ENCODE measurements at regions of chr18 and their contacts with region 1.

Region 1: GRCh38 chr18:35040988-35041814 is at the start of gene MAPRE2:
- DNase-seq: peak; percentile 96 to 100 (median 99)
- ATAC-seq: peak; percentile 82 to 89 (median 84)
- H3K4me3 ChIP-seq: peak within 1 kb of the TSS; percentile 97
- H3K4me3 Mint-ChIP-seq: peak within 1 kb of the TSS; percentile 89 to 98 (median 90)
- H3K27ac ChIP-seq: peak within 1 kb of the TSS; percentile 98
- H3K27ac Mint-ChIP-seq: peak within 1 kb of the TSS; percentile 96 to 98
- H3K4me1 ChIP-seq: peaks cover 30 to 34% of the 10 kb centered on the region in 2 experiments
- H3K4me1 Mint-ChIP-seq: peaks cover 61 to 76% (median 65%) of the 10 kb centered on the region in 3 donors
- H3K27me3 ChIP-seq: no peaks in the 10 kb centered on the region
- H3K27me3 Mint-ChIP-seq: no peaks in the 10 kb centered on the region
- total RNA-seq, gene MAPRE2: 45.6 to 96.7 (median 53.9) TPM

Region 2: GRCh38 chr18:34834897-34835296 is 206.3 kb before region 1 on chr18:
- CTCF ChIA-PET with region 1: no interaction called
- POLR2A ChIA-PET with region 1: no interaction called
- DNase-seq: no peak
- ATAC-seq: no peak
- H3K4me3 ChIP-seq: no peak overlapping the region
- H3K4me3 Mint-ChIP-seq: no peak overlapping the region
- H3K27ac ChIP-seq: no peak overlapping the region
- H3K27ac Mint-ChIP-seq: no peak overlapping the region
- H3K4me1 ChIP-seq: no peaks in the 10 kb centered on the region
- H3K4me1 Mint-ChIP-seq: no peaks in the 10 kb centered on the region
- H3K27me3 ChIP-seq: no peaks in the 10 kb centered on the region
- H3K27me3 Mint-ChIP-seq: peaks cover 0 to 3% of the 10 kb centered on the region in 2 donors

Region 3: GRCh38 chr18:34938090-34938489 is 103.1 kb before region 1 on chr18:
- CTCF ChIA-PET with region 1: no interaction called
- POLR2A ChIA-PET with region 1: no interaction called
- DNase-seq: no peak
- ATAC-seq: no peak
- H3K4me3 ChIP-seq: no peak overlapping the region
- H3K4me3 Mint-ChIP-seq: no peak overlapping the region
- H3K27ac ChIP-seq: no peak overlapping the region
- H3K27ac Mint-ChIP-seq: no peak overlapping the region
- H3K4me1 ChIP-seq: no peaks in the 10 kb centered on the region
- H3K4me1 Mint-ChIP-seq: no peaks in the 10 kb centered on the region
- H3K27me3 ChIP-seq: peaks cover 0 to 2% of the 10 kb centered on the region in 2 experiments
- H3K27me3 Mint-ChIP-seq: peaks cover 9 to 23% of the 10 kb centered on the region in 2 donors

Region 4: GRCh38 chr18:35060122-35060815 is 19.1 kb after region 1 on chr18:
- CTCF ChIA-PET with region 1: interaction called in 1 of 2 experiments, 3 read pairs
- POLR2A ChIA-PET with region 1: interaction called, 3 to 18 read pairs
- DNase-seq: no peak
- ATAC-seq: no peak
- H3K4me3 ChIP-seq: no peak overlapping the region
- H3K4me3 Mint-ChIP-seq: no peak overlapping the region
- H3K27ac ChIP-seq: no peak overlapping the region
- H3K27ac Mint-ChIP-seq: no peak overlapping the region
- H3K4me1 ChIP-seq: peaks cover 0 to 19% of the 10 kb centered on the region in 2 experiments
- H3K4me1 Mint-ChIP-seq: peaks cover 74 to 84% (median 79%) of the 10 kb centered on the region in 3 donors
- H3K27me3 ChIP-seq: no peaks in the 10 kb centered on the region
- H3K27me3 Mint-ChIP-seq: no peaks in the 10 kb centered on the region

Region 5: GRCh38 chr18:35106845-35107148 is 65.6 kb after region 1 on chr18:
- CTCF ChIA-PET with region 1: interaction called in 1 of 2 experiments, 9 read pairs
- POLR2A ChIA-PET with region 1: interaction called, 3 to 23 read pairs
- DNase-seq: peak in 1 of 35 experiments; percentile 54
- ATAC-seq: peak; percentile 19 to 79 (median 45)
- H3K4me3 ChIP-seq: no peak overlapping the region
- H3K4me3 Mint-ChIP-seq: peak overlapping the region in 1 of 3 donors; percentile 4
- H3K27ac ChIP-seq: no peak overlapping the region
- H3K27ac Mint-ChIP-seq: peak overlapping the region; percentile 73 to 78
- H3K4me1 ChIP-seq: peaks cover 0 to 28% of the 10 kb centered on the region in 2 experiments
- H3K4me1 Mint-ChIP-seq: peaks cover 48 to 71% (median 63%) of the 10 kb centered on the region in 3 donors
- H3K27me3 ChIP-seq: no peaks in the 10 kb centered on the region
- H3K27me3 Mint-ChIP-seq: no peaks in the 10 kb centered on the region

Region 6: DNA sequence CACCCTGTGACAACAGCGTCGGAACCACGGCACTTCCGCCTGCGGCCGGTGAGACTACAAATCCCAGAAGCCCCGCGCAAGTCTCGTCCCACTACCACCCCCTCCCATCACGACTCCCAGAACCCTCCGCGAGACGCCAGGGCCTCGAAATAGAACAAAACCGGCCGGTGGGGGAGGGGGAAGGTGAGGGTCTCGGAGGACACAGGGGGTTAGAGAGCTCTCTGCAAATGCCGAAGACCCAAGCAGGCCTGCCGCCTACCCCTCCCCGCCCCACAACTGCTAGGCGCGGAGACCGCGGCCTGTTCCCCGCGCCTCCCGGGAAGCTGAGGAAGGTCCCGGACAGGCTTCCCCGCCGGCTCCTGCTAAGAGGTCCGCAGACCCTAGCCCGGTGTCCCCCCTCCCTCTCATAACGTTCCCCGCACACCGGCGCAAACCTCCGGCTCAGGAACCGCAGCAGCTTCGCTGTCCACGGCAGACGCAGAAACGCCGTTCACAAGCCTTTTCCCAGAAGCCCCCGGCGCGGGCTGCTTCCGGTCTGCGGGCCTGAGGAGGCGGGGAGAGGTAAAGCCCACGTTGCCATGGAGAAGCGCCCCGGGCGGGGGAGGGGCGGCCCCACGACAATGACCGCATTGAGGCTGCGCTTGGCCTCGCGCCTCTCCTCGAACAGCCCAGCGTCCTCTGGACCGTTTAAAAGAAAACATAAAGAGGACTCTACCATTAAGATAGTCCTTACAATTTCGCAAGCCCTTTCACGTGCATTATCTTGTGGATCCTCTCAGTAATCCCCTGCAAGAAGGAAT is 302.9 kb after region 1 on chr18 and contains the start of gene ZNF24:
- CTCF ChIA-PET with region 1: no interaction called
- POLR2A ChIA-PET with region 1: interaction called, 3 to 11 read pairs
- DNase-seq: peak; percentile 81 to 94 (median 89)
- ATAC-seq: peak; percentile 90 to 94 (median 91)
- H3K4me3 ChIP-seq: peak within 1 kb of the TSS; percentile 79 to 92
- H3K4me3 Mint-ChIP-seq: peak within 1 kb of the TSS; percentile 92 to 96 (median 95)
- H3K27ac ChIP-seq: peak within 1 kb of the TSS; percentile 97
- H3K27ac Mint-ChIP-seq: peak within 1 kb of the TSS; percentile 92 to 97
- H3K4me1 ChIP-seq: peaks cover 14 to 18% of the 10 kb centered on the region in 2 experiments
- H3K4me1 Mint-ChIP-seq: peaks cover 50 to 56% (median 56%) of the 10 kb centered on the region in 3 donors
- H3K27me3 ChIP-seq: no peaks in the 10 kb centered on the region
- H3K27me3 Mint-ChIP-seq: no peaks in the 10 kb centered on the region
- total RNA-seq, gene ZNF24: 63.1 to 75.7 (median 72.2) TPM

Region 7: DNA sequence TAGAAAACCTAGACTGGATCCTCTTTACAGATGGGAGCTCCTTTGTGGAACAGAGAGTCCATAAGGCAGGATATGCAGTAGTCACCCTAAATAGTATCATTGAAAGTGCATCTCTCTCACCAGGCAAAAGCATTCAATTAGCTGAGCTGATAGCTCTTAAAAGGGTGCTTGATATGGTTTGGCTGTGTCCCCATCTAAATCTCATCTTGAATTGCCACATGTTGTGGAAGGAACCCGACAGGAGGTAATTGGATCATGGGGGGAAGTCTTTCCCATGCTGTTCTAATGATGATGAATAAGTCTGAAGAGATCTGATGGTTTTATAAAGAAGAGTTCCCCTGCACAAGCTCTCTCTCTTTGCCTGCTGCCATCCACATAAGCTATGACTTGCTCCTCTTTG is 835.0 kb after region 1 on chr18:
- CTCF ChIA-PET with region 1: no interaction called
- POLR2A ChIA-PET with region 1: no interaction called
- DNase-seq: no peak
- ATAC-seq: no peak
- H3K4me3 ChIP-seq: no peak overlapping the region
- H3K4me3 Mint-ChIP-seq: no peak overlapping the region
- H3K27ac ChIP-seq: no peak overlapping the region
- H3K27ac Mint-ChIP-seq: no peak overlapping the region
- H3K4me1 ChIP-seq: no peaks in the 10 kb centered on the region
- H3K4me1 Mint-ChIP-seq: no peaks in the 10 kb centered on the region
- H3K27me3 ChIP-seq: peaks cover 0 to 3% of the 10 kb centered on the region in 2 experiments
- H3K27me3 Mint-ChIP-seq: peaks cover 9 to 17% of the 10 kb centered on the region in 2 donors